Ascending aorta (tissue), 2 donors: ENCODE measurements at regions of chr11 and their contacts with region 1.

Region 1: GRCh38 chr11:96389720-96390487 is at the starts of genes CCDC82 and JRKL:
- DNase-seq: peak; percentile 88 to 98
- H3K4me3 ChIP-seq: peak within 1 kb of the TSS; percentile 89 to 97
- H3K27ac ChIP-seq: peak within 1 kb of the TSS; percentile 83 to 90
- H3K4me1 ChIP-seq: peaks cover 0 to 16% of the 10 kb centered on the region in 2 donors
- H3K27me3 ChIP-seq: no peaks in the 10 kb centered on the region
- CTCF ChIP-seq: no peak
- total RNA-seq, gene CCDC82: 9.5 TPM
- total RNA-seq, gene JRKL: 16.6 TPM

Region 2: DNA sequence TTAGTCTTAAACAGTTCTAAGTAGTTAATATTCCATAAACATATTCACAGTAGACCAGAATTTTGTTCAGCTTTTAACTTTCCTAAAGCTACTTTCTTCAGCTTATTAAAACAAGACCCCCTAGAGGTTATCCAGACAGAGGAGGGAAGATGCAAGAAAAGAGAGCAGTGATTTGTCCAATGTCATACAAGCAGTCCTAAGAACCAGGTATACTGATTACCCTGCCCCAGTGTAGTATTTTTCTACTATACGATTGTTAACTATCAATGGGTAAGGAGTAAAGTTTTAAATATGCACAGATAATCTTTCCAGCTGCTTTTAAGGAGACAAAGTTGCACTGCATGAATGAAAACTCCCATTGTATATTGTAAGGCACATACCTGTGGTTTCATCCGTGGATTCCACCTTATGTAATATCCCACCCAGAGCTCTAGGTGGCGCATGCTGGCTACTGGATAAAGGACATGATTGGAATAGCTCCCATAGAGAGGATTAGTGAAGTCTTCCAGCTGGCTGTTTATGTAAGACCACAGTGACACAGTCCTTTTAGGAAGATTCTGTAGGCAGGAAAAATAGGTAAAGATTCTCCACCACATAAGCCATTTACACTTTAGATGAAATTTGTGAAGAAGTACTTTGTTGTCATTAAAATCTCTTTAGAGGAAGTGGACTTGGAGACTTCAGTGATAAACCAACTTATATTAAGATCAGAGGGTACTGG is 554.0 kb before region 1 on chr11:
- intact Hi-C with region 1: loop called (anchors 1 kb)
- DNase-seq: peak; percentile 10 to 72
- H3K4me3 ChIP-seq: no peak overlapping the region
- H3K27ac ChIP-seq: no peak overlapping the region
- H3K4me1 ChIP-seq: no peaks in the 10 kb centered on the region
- H3K27me3 ChIP-seq: no peaks in the 10 kb centered on the region
- CTCF ChIP-seq: peak; percentile 60 to 86 (median 84)

Region 3: GRCh38 chr11:96001037-96001436 is 388.9 kb before region 1 on chr11:
- intact Hi-C with region 1: loop called (anchors 5 kb)
- DNase-seq: peak; percentile 65 to 96
- H3K4me3 ChIP-seq: peak overlapping the region in 1 of 2 donors; percentile 48
- H3K27ac ChIP-seq: peak overlapping the region; percentile 75 to 85
- H3K4me1 ChIP-seq: peaks cover 0 to 28% of the 10 kb centered on the region in 2 donors
- H3K27me3 ChIP-seq: no peaks in the 10 kb centered on the region
- CTCF ChIP-seq: no peak

Region 4: DNA sequence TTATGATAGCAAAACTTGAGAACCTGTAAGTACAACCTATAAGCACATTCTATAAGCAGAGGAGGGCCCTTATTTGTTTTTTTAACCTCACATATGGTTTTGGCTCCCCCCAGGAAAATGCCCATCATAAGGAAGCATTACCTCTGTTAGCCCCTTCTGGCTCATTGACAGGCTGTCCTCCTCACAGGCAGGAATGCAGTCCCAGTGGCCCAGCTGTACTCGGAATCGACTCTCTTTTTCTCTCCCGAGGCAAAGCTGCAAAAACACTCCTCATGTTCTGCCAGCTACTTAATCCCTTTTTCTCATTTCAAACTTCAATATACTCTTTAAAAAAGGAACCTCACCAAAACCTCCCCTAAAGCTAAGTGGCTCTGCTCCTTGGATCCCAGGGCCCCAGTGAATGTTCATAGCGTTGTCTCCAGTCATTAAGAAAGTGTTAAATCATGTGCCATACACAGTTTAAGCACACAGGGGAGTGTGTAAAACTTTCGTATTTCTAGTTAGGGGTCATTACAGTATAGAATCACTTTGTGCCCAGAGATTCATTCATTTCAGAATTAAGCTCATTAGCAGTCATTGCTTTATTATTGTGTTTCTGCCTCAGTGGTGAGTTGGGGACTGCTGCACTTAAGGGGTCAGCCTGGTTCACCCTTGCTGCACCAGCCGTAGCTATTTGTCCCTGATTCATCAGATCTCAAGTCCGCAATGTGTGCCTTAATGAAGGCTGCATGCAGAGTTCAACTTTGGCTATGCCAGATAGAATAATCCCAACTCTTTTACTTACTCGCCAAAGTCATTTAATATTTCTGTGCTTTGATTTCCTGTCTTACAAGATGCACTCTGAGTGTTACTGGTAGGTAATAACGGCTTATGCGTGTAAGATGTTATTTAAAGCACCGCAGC is 57.6 kb after region 1 on chr11:
- intact Hi-C with region 1: no loop called
- DNase-seq: no peak
- H3K4me3 ChIP-seq: no peak overlapping the region
- H3K27ac ChIP-seq: no peak overlapping the region
- H3K4me1 ChIP-seq: no peaks in the 10 kb centered on the region
- H3K27me3 ChIP-seq: no peaks in the 10 kb centered on the region
- CTCF ChIP-seq: no peak

Region 5: GRCh38 chr11:96748639-96749370 is 358.9 kb after region 1 on chr11:
- intact Hi-C with region 1: no loop called
- DNase-seq: no peak
- H3K4me3 ChIP-seq: no peak overlapping the region
- H3K27ac ChIP-seq: no peak overlapping the region
- H3K4me1 ChIP-seq: peaks cover 0 to 12% of the 10 kb centered on the region in 2 donors
- H3K27me3 ChIP-seq: no peaks in the 10 kb centered on the region
- CTCF ChIP-seq: no peak

Region 6: GRCh38 chr11:97092823-97093222 is 702.9 kb after region 1 on chr11:
- intact Hi-C with region 1: no loop called
- DNase-seq: no peak
- H3K4me3 ChIP-seq: no peak overlapping the region
- H3K27ac ChIP-seq: no peak overlapping the region
- H3K4me1 ChIP-seq: no peaks in the 10 kb centered on the region
- H3K27me3 ChIP-seq: no peaks in the 10 kb centered on the region
- CTCF ChIP-seq: no peak